ENCODE measurements at regions of chr2 and their contacts with region 1.

Region 1: GRCh38 chr2:189580658-189581353 is at the start of gene SLC40A1:
- DNase-seq: peak; percentile 66 to 78 (median 72)
- H3K4me3 ChIP-seq: peak within 1 kb of the TSS; percentile 58 to 63
- H3K4me3 Mint-ChIP-seq: peak within 1 kb of the TSS; percentile 91 to 96 (median 94)
- H3K27ac ChIP-seq: peak within 1 kb of the TSS; percentile 46
- H3K27ac Mint-ChIP-seq: peak within 1 kb of the TSS; percentile 71 to 96 (median 90)
- H3K4me1 ChIP-seq: peaks cover 47% of the 10 kb centered on the region
- H3K4me1 Mint-ChIP-seq: peaks cover 33 to 65% (median 47%) of the 10 kb centered on the region in 4 donors
- H3K27me3 ChIP-seq: no peaks in the 10 kb centered on the region
- H3K27me3 Mint-ChIP-seq: peaks cover 1 to 10% of the 10 kb centered on the region in 2 donors
- total RNA-seq, gene SLC40A1: 27.4 to 30.0 TPM

Region 2: GRCh38 chr2:189347540-189347939 is 233.3 kb before region 1 on chr2:
- CTCF ChIA-PET with region 1: no interaction called
- POLR2A ChIA-PET with region 1: no interaction called
- intact Hi-C with region 1: no loop called
- DNase-seq: peak; percentile 34 to 50 (median 47)
- H3K4me3 ChIP-seq: no peak overlapping the region
- H3K4me3 Mint-ChIP-seq: no peak overlapping the region
- H3K27ac ChIP-seq: no peak overlapping the region
- H3K27ac Mint-ChIP-seq: no peak overlapping the region
- H3K4me1 ChIP-seq: peaks cover 12% of the 10 kb centered on the region
- H3K4me1 Mint-ChIP-seq: peaks cover 3 to 14% (median 9%) of the 10 kb centered on the region in 4 donors
- H3K27me3 ChIP-seq: no peaks in the 10 kb centered on the region
- H3K27me3 Mint-ChIP-seq: no peaks in the 10 kb centered on the region

Region 3: GRCh38 chr2:189466660-189467059 is 114.1 kb before region 1 on chr2:
- CTCF ChIA-PET with region 1: no interaction called
- POLR2A ChIA-PET with region 1: no interaction called
- intact Hi-C with region 1: loop called (anchors 5 kb)
- DNase-seq: peak in 4 of 5 donors; percentile 13 to 24 (median 20)
- H3K4me3 ChIP-seq: no peak overlapping the region
- H3K4me3 Mint-ChIP-seq: no peak overlapping the region
- H3K27ac ChIP-seq: no peak overlapping the region
- H3K27ac Mint-ChIP-seq: peak overlapping the region in 2 of 7 donors; percentile 12 to 47
- H3K4me1 ChIP-seq: no peaks in the 10 kb centered on the region
- H3K4me1 Mint-ChIP-seq: no peaks in the 10 kb centered on the region
- H3K27me3 ChIP-seq: no peaks in the 10 kb centered on the region
- H3K27me3 Mint-ChIP-seq: no peaks in the 10 kb centered on the region

Region 4: GRCh38 chr2:189592353-189592984 is 11.7 kb after region 1 on chr2:
- CTCF ChIA-PET with region 1: interaction called, 5 read pairs
- POLR2A ChIA-PET with region 1: interaction called, 18 read pairs
- intact Hi-C with region 1: loop called (anchors 1 kb)
- DNase-seq: peak in 3 of 5 donors; percentile 2 to 17 (median 14)
- H3K4me3 ChIP-seq: no peak overlapping the region
- H3K4me3 Mint-ChIP-seq: peak overlapping the region; percentile 34 to 72 (median 62)
- H3K27ac ChIP-seq: no peak overlapping the region
- H3K27ac Mint-ChIP-seq: peak overlapping the region; percentile 27 to 79 (median 49)
- H3K4me1 ChIP-seq: peaks cover 60% of the 10 kb centered on the region
- H3K4me1 Mint-ChIP-seq: peaks cover 36 to 42% (median 41%) of the 10 kb centered on the region in 4 donors
- H3K27me3 ChIP-seq: no peaks in the 10 kb centered on the region
- H3K27me3 Mint-ChIP-seq: peaks cover 0 to 3% of the 10 kb centered on the region in 2 donors

Region 5: DNA sequence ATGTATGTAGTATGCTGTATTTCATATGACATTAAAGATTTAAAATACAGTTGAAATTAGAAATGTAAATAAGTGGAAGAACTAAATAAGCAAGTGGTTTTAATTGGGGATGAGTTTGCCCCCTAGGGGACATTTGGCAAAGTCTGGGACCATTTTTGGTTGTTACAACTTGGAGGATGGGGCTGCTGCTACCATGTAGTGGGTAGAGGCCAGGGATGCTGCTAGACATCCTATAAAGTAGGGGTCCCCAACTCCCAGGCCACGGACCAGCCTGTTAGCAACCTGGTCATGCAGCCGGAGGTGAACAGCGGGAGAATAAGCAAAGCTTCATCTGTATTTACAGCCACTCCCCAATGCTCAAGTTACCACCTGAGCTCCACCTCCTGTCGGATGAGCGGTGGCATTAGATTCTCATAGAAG is 52.6 kb after region 1 on chr2:
- CTCF ChIA-PET with region 1: interaction called, 4 read pairs
- POLR2A ChIA-PET with region 1: interaction called, 3 read pairs
- intact Hi-C with region 1: loop called (anchors 2 kb)
- DNase-seq: peak; percentile 24 to 33 (median 31)
- H3K4me3 ChIP-seq: no peak overlapping the region
- H3K4me3 Mint-ChIP-seq: no peak overlapping the region
- H3K27ac ChIP-seq: no peak overlapping the region
- H3K27ac Mint-ChIP-seq: no peak overlapping the region
- H3K4me1 ChIP-seq: no peaks in the 10 kb centered on the region
- H3K4me1 Mint-ChIP-seq: peaks cover 0 to 1% (median 0%) of the 10 kb centered on the region in 4 donors
- H3K27me3 ChIP-seq: no peaks in the 10 kb centered on the region
- H3K27me3 Mint-ChIP-seq: no peaks in the 10 kb centered on the region

Region 6: DNA sequence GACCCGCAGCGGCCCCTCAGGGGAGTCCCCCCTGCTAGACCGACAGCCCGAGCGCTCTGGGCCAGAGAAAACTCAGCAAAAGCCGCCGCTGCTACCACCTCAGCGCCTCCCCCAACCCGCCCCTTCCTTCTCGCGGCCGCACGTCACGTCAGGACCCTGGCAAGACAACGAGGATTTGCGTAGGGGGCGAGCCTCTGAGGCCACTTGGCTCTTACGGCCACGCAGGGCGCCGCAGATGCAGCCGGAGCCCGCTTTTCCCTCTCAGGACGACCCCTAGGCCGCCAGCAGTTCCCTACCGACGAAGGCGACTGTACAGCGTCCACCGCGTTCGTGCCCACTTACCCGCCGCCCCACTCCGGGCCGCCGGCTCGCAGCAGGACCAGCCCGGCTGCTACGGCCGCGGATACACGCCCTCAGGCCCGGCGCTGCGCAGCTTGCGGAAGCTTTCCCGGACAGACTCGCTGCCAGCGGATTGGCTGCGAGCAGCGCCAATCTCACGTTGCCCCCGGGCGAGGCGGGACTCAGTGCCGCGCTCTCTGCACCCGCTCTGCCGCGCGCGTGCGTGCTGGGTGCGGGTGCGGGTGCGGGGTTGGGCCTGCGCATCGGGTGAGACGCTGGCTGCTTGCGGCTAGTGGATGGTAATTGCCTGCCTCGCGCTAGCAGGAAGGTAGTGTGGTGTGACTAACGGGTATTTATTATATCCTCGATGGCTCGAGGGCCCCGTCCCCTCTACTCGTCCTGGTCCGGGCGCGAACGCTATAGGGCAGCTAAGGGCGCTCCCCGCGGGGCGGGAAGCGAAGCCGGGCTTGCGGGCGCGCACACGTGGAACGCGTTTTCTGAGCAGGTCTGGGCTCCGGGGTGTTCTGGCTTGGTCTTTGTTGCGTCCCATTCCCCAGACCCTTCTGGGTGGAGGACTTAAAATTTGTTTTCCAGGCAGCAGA is 203.4 kb after region 1 on chr2 and contains the starts of genes ORMDL1 and PMS1:
- CTCF ChIA-PET with region 1: no interaction called
- POLR2A ChIA-PET with region 1: interaction called, 9 read pairs
- intact Hi-C with region 1: loop called (anchors 5 kb)
- DNase-seq: peak; percentile 93 to 96 (median 96)
- H3K4me3 ChIP-seq: peak within 1 kb of the TSS; percentile 71 to 74
- H3K4me3 Mint-ChIP-seq: peak within 1 kb of the TSS; percentile 92 to 97 (median 94)
- H3K27ac ChIP-seq: peak within 1 kb of the TSS; percentile 93
- H3K27ac Mint-ChIP-seq: peak within 1 kb of the TSS; percentile 96 to 97 (median 97)
- H3K4me1 ChIP-seq: peaks cover 52% of the 10 kb centered on the region
- H3K4me1 Mint-ChIP-seq: peaks cover 43 to 64% (median 54%) of the 10 kb centered on the region in 4 donors
- H3K27me3 ChIP-seq: no peaks in the 10 kb centered on the region
- H3K27me3 Mint-ChIP-seq: no peaks in the 10 kb centered on the region
- total RNA-seq, gene ORMDL1: 187 to 190 TPM
- total RNA-seq, gene PMS1: 29.1 to 35.1 TPM

Measured in CD4-positive, alpha-beta memory T cell (primary cell).